ENCODE measurements at regions of chr1 and their contacts with region 1.

Region 1: DNA sequence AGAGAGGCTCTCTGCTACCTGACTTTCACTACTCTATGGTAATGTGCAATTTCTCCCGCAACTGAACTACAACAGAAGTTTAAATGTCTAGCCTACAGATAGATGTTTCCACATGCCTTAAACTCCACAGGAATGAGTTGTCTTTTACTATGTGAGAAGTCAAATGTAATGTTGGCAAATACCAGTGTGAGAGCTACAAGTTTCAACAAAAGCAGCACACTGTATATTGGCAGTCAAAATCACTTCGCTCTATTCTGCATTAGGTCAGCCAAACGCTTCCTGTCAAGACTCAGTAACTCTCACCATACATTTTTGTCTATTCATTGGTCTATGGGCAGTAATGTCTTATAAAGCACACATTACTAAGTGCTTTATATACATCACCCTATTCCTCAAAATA is 41.9 kb downstream of the LUZP1 start:
- DNase-seq: no peak
- H3K4me3 ChIP-seq: no peak overlapping the region
- H3K27ac ChIP-seq: no peak overlapping the region
- H3K4me1 ChIP-seq: peaks cover 3 to 6% of the 10 kb centered on the region in 2 donors
- H3K27me3 ChIP-seq: no peaks in the 10 kb centered on the region
- CTCF ChIP-seq: no peak
- POLR2A ChIP-seq: no peak

Region 2: DNA sequence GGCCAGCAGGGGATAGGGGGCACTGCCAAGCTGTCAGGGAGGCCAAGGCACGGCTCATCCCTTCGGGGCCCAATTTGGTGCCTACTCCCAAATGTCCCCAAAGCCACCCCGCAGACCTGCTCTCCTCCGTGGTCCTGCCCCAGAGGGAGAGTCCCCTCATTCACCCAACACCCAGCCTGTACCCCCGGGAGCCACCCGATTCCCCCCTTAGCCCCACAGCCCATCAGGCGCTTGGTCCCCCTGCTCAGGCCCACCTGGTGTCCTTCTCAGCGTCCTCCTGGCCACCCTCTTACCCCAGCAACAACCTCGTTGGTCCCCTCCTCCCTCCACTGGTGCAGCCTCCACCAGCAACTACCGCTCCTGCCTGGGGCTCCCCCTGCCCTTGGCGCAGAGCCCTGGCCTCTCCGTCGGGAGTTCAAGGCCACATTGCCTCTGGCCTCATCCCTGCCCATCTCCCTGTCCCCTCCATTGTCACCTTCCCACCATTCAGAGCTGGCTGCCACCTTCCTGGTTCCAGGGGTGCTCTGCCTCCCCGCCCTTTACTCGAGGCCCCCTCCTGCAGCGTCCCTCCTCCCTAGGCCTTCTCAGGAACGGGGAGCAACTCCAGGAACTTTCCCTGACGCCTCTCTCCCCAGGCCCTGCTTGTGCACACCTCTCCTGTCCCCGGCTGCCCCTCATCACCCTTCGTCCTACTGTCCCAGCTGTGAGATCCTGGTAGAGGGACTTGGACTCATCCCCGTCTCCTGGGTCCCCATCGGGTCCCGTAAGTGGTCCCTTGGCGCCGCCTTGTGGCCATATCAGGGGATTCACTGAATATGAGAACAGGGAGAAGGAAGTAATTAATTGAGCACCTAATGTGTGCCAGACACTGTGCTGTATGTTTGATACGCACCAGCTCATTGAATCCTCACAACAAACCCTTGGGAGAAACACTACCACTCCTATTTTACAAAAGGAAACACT is 1531.6 kb before region 1 on chr1:
- intact Hi-C with region 1: loop called (anchors 5 kb)
- DNase-seq: no peak
- H3K4me3 ChIP-seq: no peak overlapping the region
- H3K27ac ChIP-seq: no peak overlapping the region
- H3K4me1 ChIP-seq: no peaks in the 10 kb centered on the region
- H3K27me3 ChIP-seq: no peaks in the 10 kb centered on the region
- CTCF ChIP-seq: peak; percentile 30 to 47 (median 44)
- POLR2A ChIP-seq: no peak

Region 3: GRCh38 chr1:22717037-22717760 is 409.6 kb before region 1 on chr1:
- intact Hi-C with region 1: no loop called
- DNase-seq: no peak
- H3K4me3 ChIP-seq: no peak overlapping the region
- H3K27ac ChIP-seq: no peak overlapping the region
- H3K4me1 ChIP-seq: no peaks in the 10 kb centered on the region
- H3K27me3 ChIP-seq: peaks cover 0 to 3% of the 10 kb centered on the region in 2 donors
- CTCF ChIP-seq: no peak
- POLR2A ChIP-seq: no peak

Region 4: DNA sequence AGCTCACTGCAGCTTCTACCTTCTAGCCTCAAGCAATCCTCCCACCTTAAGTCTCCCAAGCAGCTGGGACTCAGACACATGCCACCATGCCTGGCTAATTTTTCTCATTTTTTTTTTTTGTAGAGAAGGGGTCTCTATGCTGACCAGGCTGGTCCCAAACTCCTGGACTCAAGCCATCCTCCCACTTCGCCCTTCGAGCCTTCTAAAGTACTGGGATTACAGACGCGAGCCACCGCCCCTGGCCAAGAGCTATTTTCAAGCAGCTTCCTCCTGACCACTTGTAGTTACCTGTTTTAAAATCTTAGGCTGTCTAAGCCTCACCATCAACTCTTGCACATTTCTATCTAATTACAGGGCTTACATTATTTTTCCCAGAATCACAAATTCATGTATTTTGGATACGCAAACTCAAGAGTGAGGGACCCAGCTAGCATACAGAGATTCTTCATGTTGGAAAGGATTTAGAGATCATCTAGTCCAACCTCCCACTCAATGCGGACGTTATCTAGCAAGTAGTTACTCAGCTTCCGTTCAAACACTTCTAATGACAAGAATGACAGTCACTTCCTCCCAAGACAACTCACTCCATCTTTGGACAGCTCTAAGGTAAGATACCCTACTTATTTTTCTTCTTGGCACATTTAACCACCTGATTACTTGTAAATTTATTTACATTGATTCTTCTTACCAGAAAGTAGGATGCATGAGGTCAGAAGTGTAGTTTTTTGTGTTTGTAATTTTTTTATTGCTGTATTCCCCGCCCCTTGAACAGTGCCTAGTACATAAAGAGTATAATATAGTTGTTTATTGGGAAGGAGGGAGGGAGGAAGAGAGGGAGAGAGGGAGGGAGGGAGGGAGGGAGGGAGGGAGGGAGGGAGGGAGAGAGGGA is 23.6 kb before region 1 on chr1:
- intact Hi-C with region 1: no loop called
- DNase-seq: no peak
- H3K4me3 ChIP-seq: no peak overlapping the region
- H3K27ac ChIP-seq: peak overlapping the region; percentile 0 to 56
- H3K4me1 ChIP-seq: peaks cover 3% of the 10 kb centered on the region in 2 donors
- H3K27me3 ChIP-seq: no peaks in the 10 kb centered on the region
- CTCF ChIP-seq: no peak
- POLR2A ChIP-seq: no peak

Measured in breast epithelium (tissue), 4 donors.